Activated CD4-positive, alpha-beta memory T cell treated with anti-CD3 and anti-CD28 coated beads for 36 hours (primary cell): ENCODE measurements at regions of chr11 and their contacts with region 1.

Region 1: GRCh38 chr11:32090545-32091373 is at the start of gene RCN1:
- DNase-seq: peak; percentile 50
- H3K4me3 Mint-ChIP-seq: peak within 1 kb of the TSS; percentile 80
- H3K27ac Mint-ChIP-seq: peak within 1 kb of the TSS; percentile 85
- H3K4me1 Mint-ChIP-seq: peaks cover 39% of the 10 kb centered on the region
- H3K27me3 Mint-ChIP-seq: peaks cover 14% of the 10 kb centered on the region
- total RNA-seq, gene RCN1: 25.4 to 27.0 TPM

Region 2: GRCh38 chr11:30322826-30323710 is 1767.7 kb before region 1 on chr11 and contains the start of gene ARL14EP:
- CTCF ChIA-PET with region 1: no interaction called
- POLR2A ChIA-PET with region 1: no interaction called
- intact Hi-C with region 1: loop called (anchors 10 kb)
- DNase-seq: peak; percentile 93
- H3K4me3 Mint-ChIP-seq: peak within 1 kb of the TSS; percentile 99
- H3K27ac Mint-ChIP-seq: peak within 1 kb of the TSS; percentile 99
- H3K4me1 Mint-ChIP-seq: peaks cover 41% of the 10 kb centered on the region
- H3K27me3 Mint-ChIP-seq: peaks cover 5% of the 10 kb centered on the region
- total RNA-seq, gene ARL14EP: 25.0 to 31.0 TPM

Region 3: DNA sequence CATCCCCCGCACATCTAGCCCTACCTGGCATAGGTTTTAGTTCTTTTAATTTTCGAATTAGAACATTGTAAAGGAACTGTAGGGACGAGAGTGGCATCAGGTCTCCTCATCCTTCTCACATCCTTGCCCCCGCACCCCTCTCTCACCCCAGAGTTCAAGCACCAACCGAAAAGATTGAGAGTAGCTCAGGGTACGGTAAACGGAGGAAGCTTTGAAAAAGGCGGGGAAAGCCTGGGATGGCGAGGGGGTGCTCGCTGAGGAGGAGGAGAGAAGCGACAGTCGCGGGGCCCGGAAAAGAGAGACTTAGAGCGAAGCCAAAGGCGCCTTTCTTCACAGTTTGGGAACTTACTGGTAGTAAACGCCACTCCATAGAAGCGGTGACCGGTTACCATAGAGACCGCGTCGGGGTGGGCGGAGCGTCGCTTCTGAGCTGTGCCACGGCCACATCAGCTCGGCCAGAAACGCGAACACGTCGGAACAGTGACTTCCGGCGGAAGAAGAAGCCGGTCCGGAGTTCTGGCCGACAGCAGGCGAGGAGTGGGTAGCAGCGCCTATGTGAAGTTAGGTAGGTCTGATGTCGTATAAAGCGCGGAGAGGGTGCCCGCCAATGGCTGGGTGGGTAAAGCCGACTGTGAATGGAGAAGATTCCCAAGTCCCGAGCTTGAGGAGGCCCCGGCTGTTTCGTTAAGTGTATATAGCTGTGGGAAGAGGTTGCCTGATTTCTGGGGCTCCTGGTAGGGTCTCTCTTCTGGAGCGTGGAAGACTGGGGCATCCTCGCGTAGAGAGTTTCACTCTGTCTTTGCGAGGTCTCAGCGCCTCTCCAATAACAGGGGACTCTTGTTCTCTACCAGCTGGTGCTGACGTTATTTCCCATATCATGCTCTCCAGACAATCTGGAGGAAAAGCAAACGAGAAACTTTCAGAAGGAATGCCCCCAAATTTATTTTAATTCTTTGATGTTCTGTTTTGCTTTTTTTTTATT is 721.1 kb before region 1 on chr11 and contains the starts of genes DCDC1 and DNAJC24:
- CTCF ChIA-PET with region 1: no interaction called
- POLR2A ChIA-PET with region 1: no interaction called
- intact Hi-C with region 1: loop called (anchors 5 kb)
- DNase-seq: peak; percentile 95
- H3K4me3 Mint-ChIP-seq: peak within 1 kb of the TSS; percentile 85
- H3K27ac Mint-ChIP-seq: peak within 1 kb of the TSS; percentile 83
- H3K4me1 Mint-ChIP-seq: peaks cover 55% of the 10 kb centered on the region
- H3K27me3 Mint-ChIP-seq: no peaks in the 10 kb centered on the region
- total RNA-seq, gene DCDC1: 0.21 to 0.27 TPM
- total RNA-seq, gene DNAJC24: 15.4 to 16.8 TPM

Region 4: DNA sequence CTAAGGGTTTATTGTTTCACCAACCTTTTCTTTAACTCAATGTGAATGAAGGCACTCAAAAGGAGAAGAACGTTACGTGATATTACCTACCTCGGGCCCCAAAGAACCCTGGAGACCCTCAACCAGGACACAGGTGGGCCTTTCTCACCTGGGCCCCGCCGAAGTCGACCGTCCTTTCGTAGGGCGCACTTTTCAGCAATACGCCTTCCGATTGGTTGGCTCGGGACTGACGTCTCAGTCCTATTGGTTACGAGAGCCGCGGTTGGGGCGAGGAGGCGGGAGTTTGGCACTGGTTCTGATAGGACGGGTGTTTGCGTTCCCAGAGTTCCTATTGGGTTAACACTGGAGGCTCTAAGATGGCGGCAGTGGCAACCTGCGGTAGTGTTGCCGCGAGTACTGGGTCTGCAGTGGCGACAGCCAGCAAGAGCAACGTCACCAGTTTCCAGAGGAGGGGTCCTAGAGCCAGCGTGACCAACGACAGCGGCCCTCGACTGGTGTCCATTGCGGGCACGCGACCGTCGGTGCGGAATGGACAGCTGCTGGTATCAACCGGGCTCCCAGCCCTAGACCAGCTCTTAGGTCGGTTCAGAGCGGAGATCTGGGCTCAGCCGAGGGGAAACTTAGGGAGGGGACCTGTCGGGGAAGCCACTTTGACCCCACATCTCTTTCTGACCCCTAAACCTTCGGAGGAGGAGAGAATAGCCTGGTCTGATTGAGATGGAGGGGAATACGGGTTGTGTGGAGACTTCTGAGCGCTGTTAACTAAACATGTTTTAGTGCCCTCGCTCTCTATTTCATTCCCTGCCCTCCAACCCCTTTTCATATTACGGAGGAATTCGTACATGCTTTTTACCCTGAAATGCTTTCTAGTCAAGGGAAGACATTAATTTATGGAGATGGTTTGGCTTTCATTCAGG is 581.1 kb before region 1 on chr11 and contains the starts of genes ELP4 and IMMP1L:
- CTCF ChIA-PET with region 1: no interaction called
- POLR2A ChIA-PET with region 1: no interaction called
- intact Hi-C with region 1: loop called (anchors 5 kb)
- DNase-seq: peak; percentile 97
- H3K4me3 Mint-ChIP-seq: peak within 1 kb of the TSS; percentile 97
- H3K27ac Mint-ChIP-seq: peak within 1 kb of the TSS; percentile 88
- H3K4me1 Mint-ChIP-seq: peaks cover 30% of the 10 kb centered on the region
- H3K27me3 Mint-ChIP-seq: no peaks in the 10 kb centered on the region
- total RNA-seq, gene ELP4: 18.3 to 18.5 TPM
- total RNA-seq, gene IMMP1L: 20.4 to 21.8 TPM

Region 5: GRCh38 chr11:31810779-31811647 is 279.7 kb before region 1 on chr11 and contains the start of gene PAX6:
- CTCF ChIA-PET with region 1: no interaction called
- POLR2A ChIA-PET with region 1: no interaction called
- intact Hi-C with region 1: loop called (anchors 10 kb)
- DNase-seq: peak; percentile 69
- H3K4me3 Mint-ChIP-seq: peak within 1 kb of the TSS; percentile 66
- H3K27ac Mint-ChIP-seq: no peak within 1 kb of the TSS
- H3K4me1 Mint-ChIP-seq: peaks cover 41% of the 10 kb centered on the region
- H3K27me3 Mint-ChIP-seq: peaks cover 74% of the 10 kb centered on the region
- total RNA-seq, gene PAX6: not detected

Region 6: GRCh38 chr11:32118025-32118974 is 27.5 kb after region 1 on chr11:
- CTCF ChIA-PET with region 1: no interaction called
- POLR2A ChIA-PET with region 1: no interaction called
- intact Hi-C with region 1: no loop called
- DNase-seq: no peak
- H3K4me3 Mint-ChIP-seq: no peak overlapping the region
- H3K27ac Mint-ChIP-seq: no peak overlapping the region
- H3K4me1 Mint-ChIP-seq: no peaks in the 10 kb centered on the region
- H3K27me3 Mint-ChIP-seq: peaks cover 21% of the 10 kb centered on the region